ENCODE measurements at regions of chr4 and their contacts with region 1.

Region 1: GRCh38 chr4:60506061-60506460 is 694.1 kb upstream of the ADGRL3 start:
- DNase-seq: no peak
- ATAC-seq: no peak

Region 2: GRCh38 chr4:60709061-60709460 is 203.0 kb after region 1 on chr4:
- intact Hi-C with region 1: loop called (anchors 5 kb)
- DNase-seq: no peak
- ATAC-seq: no peak